ENCODE measurements at regions of chr6 and their contacts with region 1.

Region 1: GRCh38 chr6:97885828-97886227 is 602.8 kb upstream of the MMS22L start:
- DNase-seq: no peak
- ATAC-seq: no peak
- H3K4me3 ChIP-seq: no peak overlapping the region
- H3K27ac ChIP-seq: no peak overlapping the region
- H3K4me1 ChIP-seq: no peaks in the 10 kb centered on the region
- H3K27me3 ChIP-seq: no peaks in the 10 kb centered on the region
- CTCF ChIP-seq: no peak

Region 2: DNA sequence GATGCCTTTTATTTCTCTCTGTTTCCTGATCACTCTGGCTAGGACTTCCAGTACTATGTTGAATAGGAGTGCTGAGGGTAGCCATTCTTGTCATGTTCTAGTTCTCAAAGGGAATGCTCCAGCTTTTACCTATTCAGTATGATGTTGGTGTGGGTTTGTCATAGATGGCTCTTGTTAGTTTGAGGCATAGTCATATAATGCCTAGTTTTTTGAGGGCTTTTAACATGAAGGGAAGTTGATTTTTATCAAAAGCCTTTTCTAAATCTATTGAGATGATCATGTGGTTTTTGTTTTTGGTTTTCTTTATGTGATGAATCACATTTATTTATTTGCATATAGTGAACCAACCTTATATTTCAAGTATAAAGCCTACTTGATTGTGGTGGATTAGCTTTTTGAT is 905.7 kb before region 1 on chr6:
- CTCF ChIA-PET with region 1: no interaction called
- POLR2A ChIA-PET with region 1: no interaction called
- in situ Hi-C with region 1: no loop called
- intact Hi-C with region 1: no loop called
- DNase-seq: no peak
- ATAC-seq: no peak
- H3K4me3 ChIP-seq: no peak overlapping the region
- H3K27ac ChIP-seq: no peak overlapping the region
- H3K4me1 ChIP-seq: no peaks in the 10 kb centered on the region
- H3K27me3 ChIP-seq: no peaks in the 10 kb centered on the region
- CTCF ChIP-seq: no peak

Region 3: GRCh38 chr6:97312245-97312644 is 573.6 kb before region 1 on chr6:
- CTCF ChIA-PET with region 1: no interaction called
- POLR2A ChIA-PET with region 1: interaction called, 10 read pairs
- in situ Hi-C with region 1: no loop called
- intact Hi-C with region 1: no loop called
- DNase-seq: no peak
- ATAC-seq: no peak
- H3K4me3 ChIP-seq: no peak overlapping the region
- H3K27ac ChIP-seq: no peak overlapping the region
- H3K4me1 ChIP-seq: no peaks in the 10 kb centered on the region
- H3K27me3 ChIP-seq: no peaks in the 10 kb centered on the region
- CTCF ChIP-seq: no peak

Region 4: GRCh38 chr6:97813889-97814567 is 71.8 kb before region 1 on chr6:
- CTCF ChIA-PET with region 1: no interaction called
- POLR2A ChIA-PET with region 1: no interaction called
- in situ Hi-C with region 1: no loop called
- intact Hi-C with region 1: no loop called
- DNase-seq: no peak
- ATAC-seq: no peak
- H3K4me3 ChIP-seq: no peak overlapping the region
- H3K27ac ChIP-seq: no peak overlapping the region
- H3K4me1 ChIP-seq: no peaks in the 10 kb centered on the region
- H3K27me3 ChIP-seq: no peaks in the 10 kb centered on the region
- CTCF ChIP-seq: no peak

Measured in Panc1 (cell line).